ENCODE measurements at regions of chr7 and their contacts with region 1.

Region 1: GRCh38 chr7:80659120-80660055 is 20.9 kb downstream of the CD36 start:
- DNase-seq: no peak
- H3K4me3 ChIP-seq: no peak overlapping the region
- H3K27ac ChIP-seq: no peak overlapping the region
- H3K4me1 ChIP-seq: peaks cover 1% of the 10 kb centered on the region
- H3K27me3 ChIP-seq: no peaks in the 10 kb centered on the region
- CTCF ChIP-seq: peak; percentile 18 to 46 (median 41)
- EP300 ChIP-seq: no peak
- POLR2A ChIP-seq: no peak

Region 2: GRCh38 chr7:80428161-80429054 is 231.0 kb before region 1 on chr7:
- intact Hi-C with region 1: loop called in 2 of 4 experiments (anchors 5 to 10 kb)
- DNase-seq: peak in 1 of 5 donors; percentile 31
- H3K4me3 ChIP-seq: no peak overlapping the region
- H3K27ac ChIP-seq: no peak overlapping the region
- H3K4me1 ChIP-seq: no peaks in the 10 kb centered on the region
- H3K27me3 ChIP-seq: no peaks in the 10 kb centered on the region
- CTCF ChIP-seq: peak in 2 of 3 donors; percentile 30 to 53
- EP300 ChIP-seq: no peak
- POLR2A ChIP-seq: no peak

Region 3: DNA sequence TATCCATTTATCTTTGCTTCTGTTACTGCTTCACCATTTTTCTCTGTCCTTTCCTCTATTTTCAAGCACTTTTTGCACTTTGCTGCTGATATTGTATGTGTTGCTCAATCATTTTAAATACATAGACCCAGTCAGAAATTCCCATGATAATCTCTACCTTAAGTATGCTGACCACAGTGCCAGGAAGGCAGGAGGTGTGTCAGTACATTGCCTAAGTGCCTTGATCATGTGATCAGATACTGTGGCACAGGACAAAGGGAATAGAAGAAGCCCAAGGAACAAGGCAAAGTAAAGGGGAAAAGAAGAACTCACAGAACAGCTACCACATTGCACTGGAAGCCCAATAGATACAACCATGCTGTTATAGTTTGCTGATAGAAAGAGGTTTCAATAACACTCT is 74.6 kb before region 1 on chr7:
- intact Hi-C with region 1: no loop called
- DNase-seq: no peak
- H3K4me3 ChIP-seq: no peak overlapping the region
- H3K27ac ChIP-seq: no peak overlapping the region
- H3K4me1 ChIP-seq: no peaks in the 10 kb centered on the region
- H3K27me3 ChIP-seq: no peaks in the 10 kb centered on the region
- CTCF ChIP-seq: no peak
- EP300 ChIP-seq: no peak
- POLR2A ChIP-seq: no peak

Measured in ovary (tissue), 10 donors.